Adrenal gland (tissue), 19 donors: ENCODE measurements at regions of chrX and their contacts with region 1.

Region 1: DNA sequence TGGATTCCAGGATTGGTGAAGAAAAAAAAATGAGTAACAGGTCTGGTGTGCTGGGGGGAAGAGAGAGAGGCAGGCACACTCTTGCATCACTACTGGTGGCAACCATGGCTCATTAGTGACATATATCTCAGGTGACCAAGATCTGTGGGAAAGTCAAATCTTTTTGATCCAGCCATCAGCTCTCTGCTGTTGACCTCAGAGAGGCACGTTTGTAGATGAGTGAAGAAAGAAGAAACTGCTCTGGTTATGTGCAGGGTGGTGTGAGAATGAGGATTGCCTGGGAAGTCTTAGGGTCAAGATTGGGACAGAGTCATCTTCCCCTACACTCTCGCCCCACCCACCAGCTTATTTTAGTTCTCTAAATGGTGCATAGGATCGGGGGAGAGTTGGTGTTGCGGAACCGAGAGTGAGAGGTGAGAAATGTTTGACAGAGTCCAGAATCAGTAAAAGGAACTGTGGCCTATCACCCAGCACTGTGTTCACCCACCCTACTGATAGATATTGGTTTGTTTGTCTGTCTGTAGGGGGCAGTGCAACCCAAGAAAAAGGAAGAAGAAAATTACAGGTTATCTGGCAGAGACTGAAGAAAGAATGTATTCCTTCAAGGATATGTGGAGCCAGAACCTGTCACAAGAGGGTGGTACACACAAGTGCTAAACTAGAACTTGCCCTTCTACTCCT is 21.9 kb downstream of the ARMCX6 start:
- DNase-seq: peak in 5 of 7 donors; percentile 25 to 47 (median 45)
- H3K4me3 ChIP-seq: no peak overlapping the region
- H3K27ac ChIP-seq: no peak overlapping the region
- H3K4me1 ChIP-seq: no peaks in the 10 kb centered on the region
- H3K27me3 ChIP-seq: peaks cover 20% of the 10 kb centered on the region
- CTCF ChIP-seq: peak in 5 of 6 experiments; percentile 65 to 83 (median 77)
- POLR2A ChIP-seq: no peak

Region 2: DNA sequence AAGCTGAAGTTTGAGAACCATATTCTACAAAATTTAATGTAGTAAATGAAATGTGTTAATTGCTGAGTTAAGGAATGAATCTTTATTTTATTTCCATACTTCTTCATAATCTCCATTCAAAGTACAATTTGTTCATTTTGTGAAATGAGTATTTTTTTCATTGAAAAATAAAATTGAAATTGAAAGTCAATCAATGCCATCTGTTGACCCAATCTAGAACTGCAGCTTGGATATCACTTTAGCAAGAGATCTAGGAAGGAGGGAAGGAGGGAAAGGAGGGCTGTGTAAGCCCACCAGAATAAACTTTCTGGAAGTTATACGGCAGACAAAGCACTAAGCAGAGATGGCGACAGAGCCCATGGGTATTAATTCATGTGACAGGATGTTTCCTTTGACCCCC is 207.6 kb after region 1 on chrX:
- intact Hi-C with region 1: loop called in 1 of 2 experiments (anchors 5 kb)
- DNase-seq: no peak
- H3K4me3 ChIP-seq: no peak overlapping the region
- H3K27ac ChIP-seq: no peak overlapping the region
- H3K4me1 ChIP-seq: no peaks in the 10 kb centered on the region
- H3K27me3 ChIP-seq: peaks cover 6% of the 10 kb centered on the region
- CTCF ChIP-seq: peak; percentile 18 to 53 (median 38)
- POLR2A ChIP-seq: no peak

Region 3: GRCh38 chrX:102085706-102086105 is 489.8 kb after region 1 on chrX:
- intact Hi-C with region 1: no loop called
- DNase-seq: peak in 1 of 7 donors; percentile 1
- H3K4me3 ChIP-seq: no peak overlapping the region
- H3K27ac ChIP-seq: no peak overlapping the region
- H3K4me1 ChIP-seq: no peaks in the 10 kb centered on the region
- H3K27me3 ChIP-seq: peaks cover 4% of the 10 kb centered on the region
- CTCF ChIP-seq: no peak
- POLR2A ChIP-seq: no peak